ENCODE measurements at regions of chr9 and their contacts with region 1.

Region 1: GRCh38 chr9:129884220-129885017 is 49.2 kb downstream of the USP20 start:
- DNase-seq: peak; percentile 92 to 96 (median 96)
- H3K4me3 ChIP-seq: peak overlapping the region; percentile 38 to 85 (median 71)
- H3K27ac ChIP-seq: peak overlapping the region; percentile 59 to 88
- H3K4me1 ChIP-seq: peaks cover 27 to 72% (median 58%) of the 10 kb centered on the region in 4 experiments
- H3K27me3 ChIP-seq: no peaks in the 10 kb centered on the region

Region 2: GRCh38 chr9:129737479-129738274 is 146.7 kb before region 1 on chr9:
- CTCF ChIA-PET with region 1: no interaction called
- POLR2A ChIA-PET with region 1: no interaction called
- DNase-seq: peak; percentile 70 to 87 (median 85)
- H3K4me3 ChIP-seq: peak overlapping the region; percentile 2 to 81 (median 53)
- H3K27ac ChIP-seq: peak overlapping the region in 1 of 2 experiments; percentile 71
- H3K4me1 ChIP-seq: peaks cover 0 to 6% (median 5%) of the 10 kb centered on the region in 4 experiments
- H3K27me3 ChIP-seq: peaks cover 0 to 17% (median 7%) of the 10 kb centered on the region in 5 experiments

Region 3: DNA sequence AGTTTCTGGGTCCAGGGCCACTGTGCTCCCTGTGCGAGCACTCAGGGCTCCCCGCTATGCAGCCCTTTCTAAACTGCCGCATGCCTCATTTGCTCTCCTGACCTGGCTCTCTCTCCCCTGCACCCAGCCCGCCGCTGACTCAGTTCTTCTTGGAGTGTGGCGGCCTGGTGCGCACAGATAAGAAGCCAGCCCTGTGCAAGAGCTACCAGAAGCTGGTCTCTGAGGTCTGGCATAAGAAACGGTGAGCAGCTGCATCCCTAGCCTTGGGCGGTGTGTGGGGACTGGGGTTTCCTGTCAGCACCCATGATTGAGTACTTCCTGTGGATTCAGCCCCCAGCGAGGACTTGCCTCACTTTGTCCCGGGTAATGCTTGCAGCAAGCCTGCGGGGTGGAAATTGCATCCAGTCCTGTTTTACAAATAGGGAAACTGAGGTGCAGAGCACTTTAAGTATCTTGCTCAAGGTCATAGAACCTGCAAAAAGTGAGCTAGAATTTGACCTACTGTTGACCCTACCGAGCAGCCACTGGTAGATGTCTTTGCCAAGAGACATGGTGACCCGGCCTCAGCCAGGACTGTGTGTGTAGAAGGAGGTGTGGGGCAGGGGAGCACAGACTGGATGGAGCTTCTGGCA is 21.2 kb before region 1 on chr9:
- CTCF ChIA-PET with region 1: interaction called, 20 read pairs
- POLR2A ChIA-PET with region 1: interaction called, 16 read pairs
- DNase-seq: peak; percentile 98 to 100 (median 100)
- H3K4me3 ChIP-seq: peak overlapping the region in 3 of 7 experiments; percentile 26 to 62 (median 38)
- H3K27ac ChIP-seq: peak overlapping the region in 1 of 2 experiments; percentile 71
- H3K4me1 ChIP-seq: peaks cover 11 to 71% (median 49%) of the 10 kb centered on the region in 4 experiments
- H3K27me3 ChIP-seq: no peaks in the 10 kb centered on the region

Region 4: GRCh38 chr9:129898191-129898590 is 13.8 kb after region 1 on chr9:
- CTCF ChIA-PET with region 1: interaction called, 11 read pairs
- POLR2A ChIA-PET with region 1: no interaction called
- DNase-seq: no peak
- H3K4me3 ChIP-seq: no peak overlapping the region
- H3K27ac ChIP-seq: no peak overlapping the region
- H3K4me1 ChIP-seq: no peaks in the 10 kb centered on the region
- H3K27me3 ChIP-seq: no peaks in the 10 kb centered on the region

Region 5: DNA sequence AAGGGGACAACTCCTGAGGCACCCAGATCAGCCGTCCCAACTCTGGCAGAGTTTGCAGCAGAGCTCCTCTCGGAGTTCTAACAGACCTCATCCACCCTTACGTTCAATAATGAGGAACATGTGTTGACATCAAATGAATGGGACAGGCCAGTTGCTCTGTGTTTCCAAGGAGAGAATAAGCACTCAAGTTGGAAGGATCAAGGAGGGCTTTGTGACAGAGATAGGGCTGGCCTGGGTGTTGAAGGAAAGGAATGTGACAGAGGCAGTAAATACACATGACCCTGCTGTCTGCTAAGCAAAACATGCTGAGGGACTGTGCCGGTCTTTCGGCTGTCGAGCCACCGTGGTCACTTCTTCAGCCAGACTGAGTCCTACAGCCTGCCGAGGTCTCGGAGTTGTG is 217.5 kb after region 1 on chr9:
- CTCF ChIA-PET with region 1: interaction called, 22 read pairs
- POLR2A ChIA-PET with region 1: no interaction called
- DNase-seq: no peak
- H3K4me3 ChIP-seq: no peak overlapping the region
- H3K27ac ChIP-seq: no peak overlapping the region
- H3K4me1 ChIP-seq: peaks cover 2 to 11% (median 6%) of the 10 kb centered on the region in 4 experiments
- H3K27me3 ChIP-seq: no peaks in the 10 kb centered on the region

Region 6: DNA sequence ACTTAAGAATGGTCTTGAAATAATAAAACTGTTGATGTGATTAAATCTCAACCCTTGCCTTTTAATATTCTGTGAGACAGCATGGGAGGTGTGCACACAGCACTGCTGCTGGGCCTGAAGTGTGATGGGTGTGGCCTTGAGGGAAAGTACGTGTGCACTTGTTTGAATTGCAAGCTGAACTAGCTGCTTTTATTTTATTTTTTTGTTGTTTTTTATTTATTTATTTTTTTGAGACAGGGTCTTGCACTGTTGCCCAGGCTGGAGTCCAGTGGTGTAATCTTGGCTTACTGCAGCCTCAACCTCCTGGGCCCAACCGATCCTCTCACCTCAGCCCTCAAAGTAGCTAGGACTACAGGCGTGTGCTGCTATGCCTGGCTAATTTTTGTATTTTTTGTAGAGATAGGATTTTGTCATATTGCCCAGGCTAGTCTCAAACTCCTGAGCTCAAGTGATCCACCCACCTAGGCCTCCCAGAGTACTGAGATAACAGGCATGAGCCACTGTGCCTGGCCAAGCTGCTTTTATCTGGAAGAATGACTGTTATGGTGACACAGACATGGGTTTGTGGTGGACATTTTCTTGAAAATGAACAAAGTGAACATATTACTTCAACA is 228.2 kb after region 1 on chr9:
- CTCF ChIA-PET with region 1: no interaction called
- POLR2A ChIA-PET with region 1: no interaction called
- DNase-seq: peak in 2 of 3 donors; percentile 19 to 52
- H3K4me3 ChIP-seq: no peak overlapping the region
- H3K27ac ChIP-seq: no peak overlapping the region
- H3K4me1 ChIP-seq: no peaks in the 10 kb centered on the region
- H3K27me3 ChIP-seq: no peaks in the 10 kb centered on the region